T-cell (primary cell): ENCODE measurements at regions of chr2 and their contacts with region 1.

Region 1: DNA sequence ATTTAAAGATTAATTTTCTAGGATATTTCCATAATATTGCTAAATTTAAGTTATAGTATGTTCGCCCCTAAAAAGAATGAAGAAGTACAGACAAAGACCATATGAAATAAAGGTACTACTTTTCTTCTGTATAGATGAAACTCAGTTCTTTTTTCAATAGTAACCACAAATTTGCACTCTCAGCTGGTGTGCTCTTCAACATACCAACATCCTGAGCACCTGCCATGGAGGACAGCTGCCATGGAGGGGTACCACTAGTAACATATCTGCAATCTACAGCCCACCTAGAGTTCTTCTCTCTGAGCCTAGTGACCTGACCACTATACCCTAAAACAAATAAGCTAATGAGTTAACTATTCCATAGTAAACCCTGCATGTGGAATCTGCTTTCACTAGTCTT is 36.8 kb upstream of the ERCC3 start:
- DNase-seq: no peak
- ATAC-seq: no peak
- H3K4me3 ChIP-seq: no peak overlapping the region
- H3K4me3 Mint-ChIP-seq: no peak overlapping the region
- H3K27ac ChIP-seq: no peak overlapping the region
- H3K27ac Mint-ChIP-seq: no peak overlapping the region
- H3K4me1 ChIP-seq: no peaks in the 10 kb centered on the region
- H3K4me1 Mint-ChIP-seq: no peaks in the 10 kb centered on the region
- H3K27me3 ChIP-seq: no peaks in the 10 kb centered on the region
- H3K27me3 Mint-ChIP-seq: no peaks in the 10 kb centered on the region

Region 2: DNA sequence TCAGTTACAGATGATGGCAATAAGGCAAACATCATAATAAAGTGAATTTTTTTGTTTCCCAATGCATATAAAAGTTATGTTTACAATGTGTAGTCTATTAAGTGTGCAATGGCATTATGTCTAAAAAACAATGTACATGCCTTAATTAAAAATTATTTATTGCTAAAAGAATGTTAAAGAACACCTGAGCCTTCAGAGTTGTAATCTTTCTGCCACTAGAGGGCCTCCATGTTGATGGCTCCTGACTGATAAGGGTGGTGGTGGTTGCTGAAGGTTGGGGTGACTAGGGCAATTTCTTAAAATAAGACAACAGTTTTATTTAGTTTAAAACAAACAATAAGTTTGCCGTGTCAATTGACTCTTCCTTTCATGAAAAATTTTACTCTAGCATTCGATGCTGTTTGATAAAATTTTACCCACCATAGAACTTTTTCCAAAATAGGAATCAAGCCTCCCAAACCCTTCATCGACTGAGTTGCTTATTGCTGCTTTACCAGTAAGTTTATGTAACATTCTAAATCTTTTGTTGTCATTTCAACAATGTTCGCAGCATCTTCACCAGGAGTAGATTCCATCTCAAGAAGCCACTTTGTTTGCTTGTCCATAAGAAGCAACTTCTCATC is 24.7 kb after region 1 on chr2:
- CTCF ChIA-PET with region 1: interaction called in 1 of 2 experiments, 6 read pairs
- POLR2A ChIA-PET with region 1: interaction called in 1 of 2 experiments, 13 read pairs
- DNase-seq: peak in 28 of 35 experiments; percentile 5 to 70 (median 18)
- ATAC-seq: peak in 3 of 4 experiments; percentile 45 to 66 (median 63)
- H3K4me3 ChIP-seq: no peak overlapping the region
- H3K4me3 Mint-ChIP-seq: no peak overlapping the region
- H3K27ac ChIP-seq: no peak overlapping the region
- H3K27ac Mint-ChIP-seq: no peak overlapping the region
- H3K4me1 ChIP-seq: peaks cover 0 to 5% of the 10 kb centered on the region in 2 experiments
- H3K4me1 Mint-ChIP-seq: peaks cover 71 to 76% (median 71%) of the 10 kb centered on the region in 3 donors
- H3K27me3 ChIP-seq: no peaks in the 10 kb centered on the region
- H3K27me3 Mint-ChIP-seq: no peaks in the 10 kb centered on the region